Endothelial cell of umbilical vein (primary cell): ENCODE measurements at regions of chr9 and their contacts with region 1.

Region 1: DNA sequence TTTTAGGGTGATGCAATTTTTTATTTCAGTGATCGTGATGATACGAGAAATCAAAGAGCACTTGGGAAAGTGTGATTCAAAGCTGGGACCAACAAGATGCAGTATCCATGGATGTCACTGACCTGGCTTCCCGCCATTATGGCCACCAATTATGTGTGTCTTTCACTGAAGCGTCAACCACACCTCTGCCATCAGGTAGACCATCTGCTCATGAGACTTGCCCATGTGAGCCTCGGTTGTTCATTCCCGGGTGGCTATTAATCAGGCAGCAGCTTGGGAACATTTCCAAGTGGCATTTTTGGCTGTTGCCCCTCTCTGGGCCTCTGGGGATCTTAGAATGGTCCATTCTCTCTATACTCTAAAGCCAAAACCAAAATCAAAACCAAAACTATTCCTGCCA is 436.0 kb upstream of the ADAMTSL1 start:
- DNase-seq: no peak
- H3K4me3 ChIP-seq: no peak overlapping the region
- H3K27ac ChIP-seq: no peak overlapping the region
- H3K4me1 ChIP-seq: no peaks in the 10 kb centered on the region
- H3K27me3 ChIP-seq: peaks cover 0 to 2% of the 10 kb centered on the region in 2 experiments
- CTCF ChIP-seq: no peak
- POLR2A ChIP-seq: no peak

Region 2: GRCh38 chr9:17847908-17848307 is 190.1 kb before region 1 on chr9:
- CTCF ChIA-PET with region 1: no interaction called
- POLR2A ChIA-PET with region 1: interaction called, 12 read pairs
- dilution Hi-C with region 1: no loop called
- intact Hi-C with region 1: no loop called
- DNase-seq: no peak
- H3K4me3 ChIP-seq: no peak overlapping the region
- H3K27ac ChIP-seq: no peak overlapping the region
- H3K4me1 ChIP-seq: no peaks in the 10 kb centered on the region
- H3K27me3 ChIP-seq: no peaks in the 10 kb centered on the region
- CTCF ChIP-seq: no peak
- POLR2A ChIP-seq: no peak

Region 3: GRCh38 chr9:18229992-18230676 is 192.2 kb after region 1 on chr9:
- CTCF ChIA-PET with region 1: no interaction called
- POLR2A ChIA-PET with region 1: no interaction called
- dilution Hi-C with region 1: no loop called
- intact Hi-C with region 1: no loop called
- DNase-seq: no peak
- H3K4me3 ChIP-seq: no peak overlapping the region
- H3K27ac ChIP-seq: no peak overlapping the region
- H3K4me1 ChIP-seq: no peaks in the 10 kb centered on the region
- H3K27me3 ChIP-seq: no peaks in the 10 kb centered on the region
- CTCF ChIP-seq: no peak
- POLR2A ChIP-seq: no peak